HCT116 (cell line): ENCODE measurements at regions of chr12 and their contacts with region 1.

Region 1: DNA sequence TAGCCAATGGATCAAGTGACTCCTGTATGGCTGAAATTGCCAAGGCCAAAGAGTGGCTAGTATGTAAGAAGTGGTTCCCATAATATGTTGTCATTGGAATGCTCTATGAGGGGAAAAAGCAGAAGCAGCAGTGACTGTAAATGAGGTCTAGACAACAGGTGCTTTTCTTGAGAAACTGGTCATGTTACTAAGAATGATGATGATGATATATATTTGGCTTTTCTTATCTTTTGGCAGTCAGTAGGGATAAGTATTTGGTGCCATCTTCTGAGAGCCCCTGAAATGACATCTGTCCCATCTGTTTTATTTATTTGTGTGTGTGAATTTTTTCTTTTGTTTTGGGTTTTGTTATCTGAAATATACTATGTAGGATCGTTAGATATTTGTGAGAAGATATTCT is 141.7 kb downstream of the SYT1 start:
- DNase-seq: peak; percentile 12
- ATAC-seq: no peak
- H3K4me3 ChIP-seq: no peak overlapping the region
- H3K27ac ChIP-seq: no peak overlapping the region
- H3K4me1 ChIP-seq: no peaks in the 10 kb centered on the region
- H3K27me3 ChIP-seq: no peaks in the 10 kb centered on the region
- CTCF ChIP-seq: peak; percentile 30 to 65 (median 52); a peak in 4 of 6 replicates
- POLR2A ChIP-seq: no peak
- RAD21 ChIP-seq: peak; percentile 77

Region 2: DNA sequence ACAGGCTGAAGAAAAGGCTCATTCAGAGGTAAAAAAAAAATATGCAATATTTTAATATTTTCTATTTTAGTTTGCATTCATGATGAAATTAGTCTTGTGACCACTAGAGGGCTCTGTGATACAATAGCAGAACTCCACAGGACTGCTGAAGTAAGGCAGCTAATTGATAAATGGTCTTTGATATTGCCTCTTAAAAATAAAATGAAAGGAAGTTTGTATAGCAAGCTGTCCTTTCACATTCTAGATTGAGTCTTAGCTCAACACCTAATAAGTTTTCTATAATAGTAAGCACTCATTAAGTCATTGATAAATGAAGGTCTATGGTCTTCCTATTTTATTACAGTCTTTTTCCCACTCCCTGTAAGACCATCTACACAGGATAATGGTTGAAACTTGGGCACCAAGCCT is 859.9 kb before region 1 on chr12:
- CTCF ChIA-PET with region 1: no interaction called
- POLR2A ChIA-PET with region 1: no interaction called
- RAD21 ChIA-PET with region 1: no interaction called
- intact Hi-C with region 1: loop called (anchors 10 kb)
- DNase-seq: peak; percentile 27
- ATAC-seq: peak; percentile 63; the same call in 1 of the 2 replicates
- H3K4me3 ChIP-seq: no peak overlapping the region
- H3K27ac ChIP-seq: no peak overlapping the region
- H3K4me1 ChIP-seq: no peaks in the 10 kb centered on the region
- H3K27me3 ChIP-seq: no peaks in the 10 kb centered on the region
- CTCF ChIP-seq: peak; percentile 45 to 72 (median 60); a peak in 5 of 6 replicates
- POLR2A ChIP-seq: no peak
- RAD21 ChIP-seq: peak; percentile 67

Region 3: GRCh38 chr12:78181544-78182162 is 824.7 kb before region 1 on chr12:
- CTCF ChIA-PET with region 1: no interaction called
- POLR2A ChIA-PET with region 1: no interaction called
- RAD21 ChIA-PET with region 1: no interaction called
- intact Hi-C with region 1: loop called (anchors 2 kb)
- DNase-seq: no peak
- ATAC-seq: no peak
- H3K4me3 ChIP-seq: no peak overlapping the region
- H3K27ac ChIP-seq: no peak overlapping the region
- H3K4me1 ChIP-seq: no peaks in the 10 kb centered on the region
- H3K27me3 ChIP-seq: no peaks in the 10 kb centered on the region
- CTCF ChIP-seq: peak; percentile 13 to 53 (median 19); a peak in 4 of 6 replicates
- POLR2A ChIP-seq: no peak
- RAD21 ChIP-seq: peak; percentile 67

Region 4: GRCh38 chr12:78470354-78471195 is 535.7 kb before region 1 on chr12:
- CTCF ChIA-PET with region 1: interaction called, 11 read pairs
- POLR2A ChIA-PET with region 1: no interaction called
- RAD21 ChIA-PET with region 1: no interaction called
- intact Hi-C with region 1: loop called (anchors 1 kb)
- DNase-seq: peak; percentile 37
- ATAC-seq: peak; percentile 83
- H3K4me3 ChIP-seq: no peak overlapping the region
- H3K27ac ChIP-seq: no peak overlapping the region
- H3K4me1 ChIP-seq: no peaks in the 10 kb centered on the region
- H3K27me3 ChIP-seq: no peaks in the 10 kb centered on the region
- CTCF ChIP-seq: peak; percentile 55 to 75 (median 68); a peak in 5 of 6 replicates
- POLR2A ChIP-seq: no peak
- RAD21 ChIP-seq: peak; percentile 70

Region 5: GRCh38 chr12:78562368-78563205 is 443.7 kb before region 1 on chr12:
- CTCF ChIA-PET with region 1: interaction called, 5 read pairs
- POLR2A ChIA-PET with region 1: no interaction called
- RAD21 ChIA-PET with region 1: no interaction called
- intact Hi-C with region 1: loop called (anchors 2 kb)
- DNase-seq: peak; percentile 37
- ATAC-seq: peak; percentile 82
- H3K4me3 ChIP-seq: no peak overlapping the region
- H3K27ac ChIP-seq: no peak overlapping the region
- H3K4me1 ChIP-seq: no peaks in the 10 kb centered on the region
- H3K27me3 ChIP-seq: no peaks in the 10 kb centered on the region
- CTCF ChIP-seq: peak; percentile 34 to 68 (median 45); a peak in 5 of 6 replicates
- POLR2A ChIP-seq: no peak
- RAD21 ChIP-seq: peak; percentile 74

Region 6: DNA sequence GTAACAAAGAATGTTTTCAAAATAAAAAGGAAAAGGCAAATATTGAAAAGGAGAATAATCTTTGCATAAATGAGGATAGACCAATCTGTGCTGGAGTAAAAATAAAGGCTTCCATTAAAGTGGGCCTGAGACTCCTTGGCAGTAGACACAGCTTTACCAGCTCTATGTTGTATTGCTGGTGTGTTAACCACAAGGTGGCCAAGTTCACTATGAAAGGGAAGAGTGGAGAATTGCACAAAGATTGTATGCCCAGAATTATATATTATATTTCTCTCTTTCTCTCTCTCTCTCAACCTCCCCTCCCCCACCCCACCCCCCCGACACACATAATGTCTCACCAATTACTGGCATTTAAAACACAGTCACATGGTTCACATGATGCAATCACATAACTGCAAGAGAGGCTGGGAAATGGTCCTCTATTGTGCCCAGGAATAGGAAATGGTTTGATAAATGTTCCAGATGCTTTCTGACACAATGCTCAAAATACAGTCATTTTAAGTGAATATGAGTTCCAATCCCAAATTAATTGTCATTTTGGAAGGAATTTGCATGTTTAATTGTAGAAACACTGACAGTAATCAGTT is 364.4 kb before region 1 on chr12:
- CTCF ChIA-PET with region 1: no interaction called
- POLR2A ChIA-PET with region 1: no interaction called
- RAD21 ChIA-PET with region 1: no interaction called
- intact Hi-C with region 1: no loop called
- DNase-seq: peak; percentile 0
- ATAC-seq: peak; percentile 54; the same call in 1 of the 2 replicates
- H3K4me3 ChIP-seq: no peak overlapping the region
- H3K27ac ChIP-seq: no peak overlapping the region
- H3K4me1 ChIP-seq: no peaks in the 10 kb centered on the region
- H3K27me3 ChIP-seq: no peaks in the 10 kb centered on the region
- CTCF ChIP-seq: no peak
- POLR2A ChIP-seq: no peak
- RAD21 ChIP-seq: peak; percentile 29; the same call in 1 of the 2 replicates

Region 7: GRCh38 chr12:79344855-79345847 is 338.8 kb after region 1 on chr12:
- CTCF ChIA-PET with region 1: interaction called, 3 read pairs
- POLR2A ChIA-PET with region 1: no interaction called
- RAD21 ChIA-PET with region 1: no interaction called
- intact Hi-C with region 1: loop called (anchors 10 kb)
- DNase-seq: peak; percentile 58
- ATAC-seq: peak; percentile 100
- H3K4me3 ChIP-seq: no peak overlapping the region
- H3K27ac ChIP-seq: no peak overlapping the region
- H3K4me1 ChIP-seq: no peaks in the 10 kb centered on the region
- H3K27me3 ChIP-seq: no peaks in the 10 kb centered on the region
- CTCF ChIP-seq: peak; percentile 55 to 81 (median 78); a peak in 5 of 6 replicates
- POLR2A ChIP-seq: no peak
- RAD21 ChIP-seq: peak; percentile 83